Ovary (tissue), 10 donors: ENCODE measurements at regions of chr18 and their contacts with region 1.

Region 1: GRCh38 chr18:10851824-10852319 is 297.5 kb downstream of the PIEZO2 start:
- DNase-seq: no peak
- H3K4me3 ChIP-seq: no peak overlapping the region
- H3K27ac ChIP-seq: no peak overlapping the region
- H3K4me1 ChIP-seq: no peaks in the 10 kb centered on the region
- H3K27me3 ChIP-seq: no peaks in the 10 kb centered on the region
- CTCF ChIP-seq: peak; percentile 55 to 76 (median 65)
- EP300 ChIP-seq: no peak
- POLR2A ChIP-seq: no peak

Region 2: GRCh38 chr18:11034884-11035283 is 183.0 kb after region 1 on chr18:
- intact Hi-C with region 1: loop called (anchors 5 to 10 kb)
- DNase-seq: no peak
- H3K4me3 ChIP-seq: no peak overlapping the region
- H3K27ac ChIP-seq: no peak overlapping the region
- H3K4me1 ChIP-seq: peaks cover 2% of the 10 kb centered on the region
- H3K27me3 ChIP-seq: no peaks in the 10 kb centered on the region
- CTCF ChIP-seq: no peak
- EP300 ChIP-seq: no peak
- POLR2A ChIP-seq: no peak

Region 3: DNA sequence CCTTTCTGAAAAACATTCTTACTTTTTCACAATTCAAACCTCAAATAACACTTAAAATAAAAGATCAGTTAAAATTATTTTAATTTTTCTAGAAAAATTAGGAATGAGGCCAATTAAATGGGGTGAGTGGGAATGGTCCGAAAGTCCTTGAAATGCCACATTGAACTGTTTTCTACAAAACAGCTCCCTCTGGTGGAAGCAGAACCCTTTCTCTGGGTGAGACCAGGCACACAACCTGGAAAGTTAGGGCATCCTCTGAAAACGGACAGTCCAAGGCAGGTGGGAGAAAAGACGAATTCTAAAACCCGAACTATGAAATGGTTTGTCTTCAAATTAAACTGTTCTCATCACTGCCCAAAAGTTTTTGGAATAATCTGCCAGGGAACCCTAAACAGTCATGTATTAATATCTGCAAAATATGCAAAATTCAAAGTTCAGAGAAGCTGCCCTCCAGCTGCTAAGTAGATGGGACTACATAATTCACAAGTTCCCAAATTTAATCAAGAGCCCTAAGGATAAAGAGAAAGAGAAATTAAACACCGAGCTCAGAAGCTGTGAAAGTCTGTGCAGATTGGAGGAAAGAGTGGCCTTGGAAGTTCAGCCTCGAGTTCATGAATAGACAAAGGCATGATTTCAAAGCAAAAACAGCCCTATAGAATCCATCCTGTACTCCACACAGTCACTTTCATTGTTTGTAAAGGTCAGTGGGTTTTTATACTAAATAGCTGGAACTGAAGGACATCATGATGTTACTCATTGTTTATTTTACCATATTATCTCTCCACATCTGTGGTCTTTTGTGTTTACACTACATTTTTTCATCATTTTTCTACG is 189.2 kb after region 1 on chr18:
- intact Hi-C with region 1: loop called (anchors 5 to 10 kb)
- DNase-seq: peak in 4 of 5 donors; percentile 34 to 68 (median 52)
- H3K4me3 ChIP-seq: no peak overlapping the region
- H3K27ac ChIP-seq: no peak overlapping the region
- H3K4me1 ChIP-seq: no peaks in the 10 kb centered on the region
- H3K27me3 ChIP-seq: no peaks in the 10 kb centered on the region
- CTCF ChIP-seq: peak in 2 of 3 donors; percentile 63 to 79
- EP300 ChIP-seq: no peak
- POLR2A ChIP-seq: no peak

Region 4: DNA sequence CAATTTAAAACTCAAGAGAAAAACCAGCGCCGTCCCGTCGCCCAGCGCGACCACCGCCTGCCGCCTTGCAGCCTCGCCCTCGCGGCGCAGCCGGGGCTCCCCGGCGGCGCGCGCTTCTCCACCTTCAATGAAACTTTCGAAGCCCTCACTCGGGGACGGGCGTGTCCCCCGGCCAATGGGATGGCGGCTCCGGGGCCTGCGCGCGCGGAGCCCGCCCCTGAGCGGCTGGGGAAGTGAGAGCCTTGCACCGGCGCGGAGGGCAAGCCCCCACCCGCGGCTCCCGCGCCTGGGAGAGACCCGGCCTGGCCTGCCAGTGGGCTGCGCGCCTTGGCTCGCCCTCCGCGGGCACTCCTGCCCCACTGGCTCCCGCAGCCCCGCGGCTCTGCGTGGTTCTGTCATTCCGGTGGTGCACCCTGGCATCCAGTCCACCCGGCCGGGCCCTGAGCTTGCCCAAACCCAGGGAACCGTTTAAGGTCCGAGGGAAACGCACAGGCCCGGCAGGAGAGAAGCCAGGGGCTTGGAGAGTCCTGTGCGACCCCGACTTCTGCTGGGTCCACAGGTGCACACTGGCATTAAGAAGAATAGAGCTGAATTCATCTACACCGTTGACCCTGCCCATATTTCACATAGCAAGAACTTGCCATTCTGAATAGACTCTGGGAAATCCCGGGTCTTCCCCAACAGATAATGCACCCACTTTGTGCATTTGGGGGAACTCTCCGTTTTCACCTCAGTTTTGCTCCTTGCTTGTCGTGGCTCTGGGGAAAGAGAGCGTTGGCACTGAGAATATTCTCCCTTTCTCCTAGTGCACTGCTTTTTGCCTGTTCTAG is 297.8 kb after region 1 on chr18 and contains the start of gene PIEZO2:
- intact Hi-C with region 1: loop called in 2 of 4 experiments (anchors 10 kb)
- DNase-seq: peak; percentile 15 to 63 (median 44)
- H3K4me3 ChIP-seq: peak within 1 kb of the TSS; percentile 16
- H3K27ac ChIP-seq: no peak within 1 kb of the TSS
- H3K4me1 ChIP-seq: peaks cover 4% of the 10 kb centered on the region
- H3K27me3 ChIP-seq: no peaks in the 10 kb centered on the region
- CTCF ChIP-seq: no peak
- EP300 ChIP-seq: no peak
- POLR2A ChIP-seq: no peak
- total RNA-seq, gene PIEZO2: 2.4 to 8.5 (median 3.2) TPM

Region 5: GRCh38 chr18:11553098-11553940 is 701.4 kb after region 1 on chr18:
- intact Hi-C with region 1: loop called in 1 of 4 experiments (anchors 10 kb)
- DNase-seq: no peak
- H3K4me3 ChIP-seq: no peak overlapping the region
- H3K27ac ChIP-seq: no peak overlapping the region
- H3K4me1 ChIP-seq: no peaks in the 10 kb centered on the region
- H3K27me3 ChIP-seq: no peaks in the 10 kb centered on the region
- CTCF ChIP-seq: peak; percentile 16 to 66 (median 18)
- EP300 ChIP-seq: no peak
- POLR2A ChIP-seq: no peak